Activated T-helper 1 cell treated with anti-CD3 and anti-CD28 coated beads, Interleukin-12 subunit alpha, Interleukin-12 subunit beta, Interleukin-2, Interleukin-4 antibody, amounts not matched to agents 30 ng/mL and 10 ng/mL and 1 ng/mL, durations not matched to agents 14 hours and 24 hours and 36 hours (primary cell): ENCODE measurements at regions of chr20 and their contacts with region 1.

Region 1: DNA sequence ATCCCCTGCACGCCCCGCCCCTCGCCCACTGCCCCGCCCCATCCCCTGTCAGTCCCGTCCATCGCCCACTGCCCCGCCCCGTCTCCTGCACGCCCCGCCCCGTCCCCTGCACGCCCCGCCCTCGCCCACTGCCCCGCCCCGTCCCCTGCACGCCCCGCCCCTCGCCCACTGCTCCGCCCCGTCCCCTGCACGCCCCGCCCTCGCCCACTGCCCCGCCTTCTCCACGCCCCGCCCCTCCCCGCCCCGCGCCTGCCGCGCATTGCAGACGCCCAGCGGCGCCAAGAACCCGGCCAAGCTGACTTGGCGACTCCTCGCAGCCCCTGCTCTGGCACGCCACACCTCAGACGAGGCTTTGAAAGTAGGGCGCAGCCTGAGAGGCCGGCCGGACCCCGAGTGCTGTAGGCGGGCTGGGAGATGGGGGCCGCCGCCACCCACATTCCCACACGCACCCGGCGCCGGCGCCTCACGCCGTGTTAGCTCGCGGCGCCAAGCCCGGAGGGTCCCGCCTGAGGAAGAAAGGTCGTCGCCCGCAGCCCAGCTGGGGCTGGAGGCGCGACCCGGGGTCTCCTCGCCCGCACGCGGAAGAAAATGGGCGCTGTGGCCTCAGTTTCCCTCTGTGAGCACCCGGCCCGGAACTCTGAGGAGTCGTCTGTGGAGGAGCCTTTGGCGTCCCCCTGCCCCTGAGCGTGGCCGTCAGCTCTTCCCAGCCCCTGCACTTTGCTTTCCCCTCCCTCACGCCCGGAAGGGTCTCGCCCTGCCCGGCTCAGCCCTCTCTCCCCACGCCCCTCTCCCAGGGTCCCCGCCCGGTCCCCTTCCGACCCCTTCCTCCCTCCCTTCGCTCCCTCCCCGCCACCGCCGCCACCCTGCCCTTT is at the start of gene RAD21L1:
- DNase-seq: peak; percentile 57
- H3K4me3 Mint-ChIP-seq: peak within 1 kb of the TSS; percentile 84
- H3K27ac Mint-ChIP-seq: no peak within 1 kb of the TSS
- H3K4me1 Mint-ChIP-seq: peaks cover 7% of the 10 kb centered on the region
- H3K27me3 Mint-ChIP-seq: peaks cover 36% of the 10 kb centered on the region
- total RNA-seq, gene RAD21L1: not detected in 2 replicates

Region 2: DNA sequence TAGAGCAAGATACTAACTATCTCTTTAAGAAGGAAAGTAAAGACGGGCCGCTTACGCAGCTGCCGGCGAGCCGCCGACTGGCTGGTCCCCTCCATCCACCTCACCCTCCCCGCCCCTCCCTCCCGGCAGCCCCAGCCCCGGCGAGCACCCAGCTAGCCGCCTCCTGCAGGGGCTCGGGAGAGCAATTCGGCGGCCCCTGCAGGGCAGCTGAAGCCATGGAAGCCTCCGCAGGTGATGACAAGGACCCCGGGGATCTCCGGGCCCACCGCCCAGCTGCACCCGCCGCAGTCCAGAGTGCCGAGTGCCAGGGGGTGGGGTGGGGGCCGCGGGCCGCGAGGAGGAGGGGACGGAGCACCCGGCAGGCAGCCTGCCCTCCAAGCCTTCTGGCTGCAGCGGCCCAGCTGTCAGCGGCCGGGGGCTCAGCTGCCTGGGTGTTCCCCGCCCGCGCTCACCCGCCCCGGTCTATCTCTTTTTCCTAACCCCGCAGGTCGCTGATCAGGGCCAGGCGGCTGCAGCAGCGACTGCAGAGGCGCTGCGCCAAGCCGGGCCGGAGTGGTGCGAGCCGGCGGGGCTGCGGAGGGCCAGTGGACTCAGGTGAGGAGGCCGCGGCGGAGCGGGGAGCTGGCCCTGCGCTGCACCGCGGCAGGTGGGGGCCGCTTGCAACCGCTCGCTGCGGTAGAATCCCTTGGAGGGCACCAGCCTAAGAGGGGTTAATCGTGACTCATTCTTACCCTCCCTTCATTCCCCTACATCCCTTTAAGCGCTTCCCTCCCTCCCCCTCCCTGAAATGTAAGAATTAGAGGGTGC is 40.4 kb after region 1 on chr20 and contains the start of gene SNPH:
- intact Hi-C with region 1: loop called (anchors 1 kb)
- DNase-seq: peak; percentile 63
- H3K4me3 Mint-ChIP-seq: peak within 1 kb of the TSS; percentile 89
- H3K27ac Mint-ChIP-seq: peak within 1 kb of the TSS; percentile 87
- H3K4me1 Mint-ChIP-seq: peaks cover 32% of the 10 kb centered on the region
- H3K27me3 Mint-ChIP-seq: peaks cover 3% of the 10 kb centered on the region
- total RNA-seq, gene SNPH: 2.1 and 2.5 TPM in 2 replicates

Region 3: DNA sequence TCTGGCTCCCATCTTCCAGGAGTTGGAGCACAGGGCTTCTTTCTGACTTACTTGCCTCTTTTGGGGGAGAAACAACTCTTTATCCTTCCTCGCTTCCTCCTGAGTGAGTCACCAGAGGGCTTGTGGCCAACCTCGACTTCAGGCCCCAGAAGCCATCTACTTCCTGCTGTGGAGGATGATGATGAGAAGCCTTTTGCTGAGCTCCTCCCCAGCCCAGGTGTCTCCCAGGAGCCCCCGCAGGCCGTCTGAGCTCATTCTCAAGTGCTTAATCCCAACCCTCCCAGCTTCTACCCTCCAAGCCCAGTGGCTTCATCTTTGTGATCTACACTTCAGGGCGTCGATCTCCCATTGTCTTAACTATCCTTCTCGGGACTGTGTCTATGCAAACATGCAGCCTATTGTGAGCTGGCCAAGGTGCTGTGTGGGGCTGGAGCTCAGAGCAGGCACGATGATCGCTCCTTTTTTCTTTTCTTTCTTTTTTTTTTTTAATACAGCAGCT is 75.1 kb after region 1 on chr20:
- intact Hi-C with region 1: loop called (anchors 5 kb)
- DNase-seq: peak; percentile 55
- H3K4me3 Mint-ChIP-seq: peak overlapping the region; percentile 67
- H3K27ac Mint-ChIP-seq: peak overlapping the region; percentile 92
- H3K4me1 Mint-ChIP-seq: peaks cover 27% of the 10 kb centered on the region
- H3K27me3 Mint-ChIP-seq: no peaks in the 10 kb centered on the region